ENCODE measurements at regions of chr6 and their contacts with region 1.

Region 1: GRCh38 chr6:47631269-47631772 is 67.1 kb upstream of the ADGRF4 start:
- DNase-seq: no peak
- ATAC-seq: peak; percentile 68 to 88 (median 84)
- H3K4me3 ChIP-seq: no peak overlapping the region
- H3K27ac ChIP-seq: no peak overlapping the region
- H3K4me1 ChIP-seq: peaks cover 5 to 19% (median 6%) of the 10 kb centered on the region in 3 donors
- H3K27me3 ChIP-seq: no peaks in the 10 kb centered on the region
- CTCF ChIP-seq: peak; percentile 31 to 64 (median 52)

Region 2: GRCh38 chr6:47302043-47302442 is 329.3 kb before region 1 on chr6:
- intact Hi-C with region 1: no loop called
- DNase-seq: no peak
- ATAC-seq: peak in 2 of 4 donors; percentile 75 to 79
- H3K4me3 ChIP-seq: no peak overlapping the region
- H3K27ac ChIP-seq: no peak overlapping the region
- H3K4me1 ChIP-seq: peaks cover 0 to 13% (median 0%) of the 10 kb centered on the region in 3 donors
- H3K27me3 ChIP-seq: no peaks in the 10 kb centered on the region
- CTCF ChIP-seq: no peak

Region 3: DNA sequence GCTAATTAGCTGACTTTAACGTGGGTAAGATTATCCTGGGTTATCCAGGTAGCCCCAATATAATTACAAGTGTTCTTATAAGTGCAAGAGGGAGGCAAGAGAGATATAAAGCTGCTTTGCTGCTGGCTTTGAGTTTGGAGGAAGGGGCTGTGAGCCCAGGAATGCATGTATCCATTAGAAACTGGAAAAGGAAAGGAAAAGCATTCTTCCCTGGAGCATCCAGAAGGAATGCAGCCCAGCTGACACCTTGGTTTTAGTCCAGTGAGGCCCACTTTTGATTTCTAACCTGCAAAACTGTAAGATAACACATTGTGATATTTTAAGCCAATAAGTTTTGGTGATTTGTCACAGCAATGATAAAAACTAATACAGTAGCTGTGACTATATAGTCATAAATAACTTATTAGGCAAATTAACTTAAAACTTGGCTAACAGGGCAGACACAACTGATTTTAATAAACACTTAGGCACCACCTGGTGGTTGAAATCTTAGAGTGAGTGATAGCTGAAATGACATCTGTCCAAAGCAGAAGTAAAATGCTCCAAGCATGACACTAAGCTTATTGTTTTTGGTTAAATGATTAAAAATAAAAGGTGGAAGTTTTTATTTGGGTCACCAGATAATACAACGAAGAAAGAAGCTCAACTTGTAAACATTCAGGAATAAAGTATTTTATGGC is 102.7 kb after region 1 on chr6:
- intact Hi-C with region 1: loop called in 1 of 3 experiments (anchors 10 kb)
- DNase-seq: no peak
- ATAC-seq: peak in 3 of 4 donors; percentile 55 to 61 (median 56)
- H3K4me3 ChIP-seq: no peak overlapping the region
- H3K27ac ChIP-seq: no peak overlapping the region
- H3K4me1 ChIP-seq: no peaks in the 10 kb centered on the region
- H3K27me3 ChIP-seq: no peaks in the 10 kb centered on the region
- CTCF ChIP-seq: peak in 3 of 4 donors; percentile 17 to 33 (median 28)

Region 4: DNA sequence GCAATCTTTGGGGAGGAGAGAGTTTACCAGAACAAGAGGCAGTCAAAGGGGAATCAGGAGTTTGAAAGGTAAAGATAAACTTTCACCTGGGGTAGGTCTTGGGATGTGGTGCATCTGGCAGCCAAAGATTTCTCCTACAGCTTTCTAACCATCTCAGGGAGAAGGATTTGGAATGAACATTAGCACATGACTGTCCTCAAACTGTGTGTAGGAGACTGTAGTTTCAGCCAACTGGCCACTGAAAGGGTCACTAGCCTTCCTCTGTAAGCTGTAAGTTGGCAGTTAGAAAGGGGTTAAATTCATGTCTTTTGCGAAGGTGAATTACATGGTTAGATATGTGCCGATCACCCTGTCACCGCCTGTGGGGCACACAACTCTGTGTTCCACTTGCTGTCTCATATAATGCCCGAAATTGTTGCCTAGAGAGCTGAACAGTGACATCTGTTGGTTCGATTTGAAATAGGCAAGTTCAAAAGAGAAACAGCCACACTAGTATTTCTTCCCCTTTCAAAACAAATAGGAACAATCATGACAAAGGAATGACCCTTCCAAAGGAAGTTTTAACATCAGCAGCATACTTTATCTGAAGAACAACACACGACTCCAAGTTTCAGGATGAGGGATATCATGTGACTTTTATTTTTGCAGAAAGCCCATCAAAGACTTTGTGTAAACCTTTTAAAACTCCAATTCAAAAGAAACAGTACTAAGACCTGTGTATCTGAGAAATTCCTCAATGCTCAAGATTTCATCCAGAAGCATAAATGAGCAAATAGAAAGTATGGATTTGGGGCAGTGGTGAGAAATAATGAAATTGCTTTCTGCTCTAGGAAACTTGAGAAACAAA is 149.4 kb after region 1 on chr6:
- intact Hi-C with region 1: loop called in 1 of 3 experiments (anchors 5 kb)
- DNase-seq: peak in 2 of 6 donors; percentile 18 to 21
- ATAC-seq: peak; percentile 78 to 99 (median 92)
- H3K4me3 ChIP-seq: no peak overlapping the region
- H3K27ac ChIP-seq: no peak overlapping the region
- H3K4me1 ChIP-seq: no peaks in the 10 kb centered on the region
- H3K27me3 ChIP-seq: no peaks in the 10 kb centered on the region
- CTCF ChIP-seq: peak in 3 of 4 donors; percentile 37 to 52 (median 42)

Measured in pancreas (tissue), 10 donors.